ENCODE measurements at regions of chr2 and their contacts with region 1.

Region 1: DNA sequence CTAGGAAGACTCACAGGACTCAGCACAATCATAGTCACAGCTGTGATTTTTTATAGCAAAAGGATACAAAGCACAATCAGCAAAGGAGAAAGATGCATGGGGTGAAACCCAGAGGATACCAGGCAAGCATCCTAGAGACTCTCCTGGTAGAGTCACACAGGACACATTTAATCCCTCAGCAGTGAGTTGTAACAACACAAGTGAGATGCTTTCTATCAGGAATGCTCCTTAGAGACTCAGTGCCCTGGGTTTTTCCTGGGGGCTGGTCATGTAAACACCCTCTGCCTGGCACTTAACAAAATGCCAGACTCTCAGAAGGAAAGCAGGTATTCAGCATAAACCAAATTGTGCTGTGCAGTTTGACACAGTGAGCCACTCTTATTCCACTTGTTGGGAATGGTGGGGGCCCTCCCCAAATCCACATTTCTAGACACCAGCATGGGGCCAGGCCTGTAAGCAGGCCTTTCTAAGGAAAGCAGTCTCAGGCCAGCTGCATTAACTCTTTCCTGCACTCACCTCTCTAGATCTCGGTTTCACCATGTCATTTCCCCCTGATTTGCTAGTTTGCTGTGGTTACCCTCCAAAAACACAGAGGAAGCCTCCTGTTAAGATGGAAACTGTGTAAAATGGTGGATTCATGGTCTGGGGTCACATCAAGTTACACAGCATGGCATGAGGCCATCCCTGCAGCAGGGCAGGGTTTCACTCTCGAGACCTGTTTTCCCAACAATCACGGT is 16.9 kb upstream of the RNU4ATAC start:
- DNase-seq: no peak
- ATAC-seq: no peak
- H3K4me3 ChIP-seq: no peak overlapping the region
- H3K4me3 Mint-ChIP-seq: no peak overlapping the region
- H3K27ac ChIP-seq: no peak overlapping the region
- H3K27ac Mint-ChIP-seq: no peak overlapping the region
- H3K4me1 ChIP-seq: no peaks in the 10 kb centered on the region
- H3K4me1 Mint-ChIP-seq: peaks cover 10% of the 10 kb centered on the region
- H3K27me3 ChIP-seq: no peaks in the 10 kb centered on the region
- H3K27me3 Mint-ChIP-seq: no peaks in the 10 kb centered on the region
- CTCF ChIP-seq: no peak

Region 2: GRCh38 chr2:121479882-121480522 is 33.8 kb before region 1 on chr2:
- CTCF ChIA-PET with region 1: no interaction called
- POLR2A ChIA-PET with region 1: no interaction called
- intact Hi-C with region 1: no loop called
- DNase-seq: no peak
- ATAC-seq: no peak
- H3K4me3 ChIP-seq: no peak overlapping the region
- H3K4me3 Mint-ChIP-seq: no peak overlapping the region
- H3K27ac ChIP-seq: no peak overlapping the region
- H3K27ac Mint-ChIP-seq: no peak overlapping the region
- H3K4me1 ChIP-seq: no peaks in the 10 kb centered on the region
- H3K4me1 Mint-ChIP-seq: peaks cover 41% of the 10 kb centered on the region
- H3K27me3 ChIP-seq: no peaks in the 10 kb centered on the region
- H3K27me3 Mint-ChIP-seq: no peaks in the 10 kb centered on the region
- CTCF ChIP-seq: no peak

Region 3: DNA sequence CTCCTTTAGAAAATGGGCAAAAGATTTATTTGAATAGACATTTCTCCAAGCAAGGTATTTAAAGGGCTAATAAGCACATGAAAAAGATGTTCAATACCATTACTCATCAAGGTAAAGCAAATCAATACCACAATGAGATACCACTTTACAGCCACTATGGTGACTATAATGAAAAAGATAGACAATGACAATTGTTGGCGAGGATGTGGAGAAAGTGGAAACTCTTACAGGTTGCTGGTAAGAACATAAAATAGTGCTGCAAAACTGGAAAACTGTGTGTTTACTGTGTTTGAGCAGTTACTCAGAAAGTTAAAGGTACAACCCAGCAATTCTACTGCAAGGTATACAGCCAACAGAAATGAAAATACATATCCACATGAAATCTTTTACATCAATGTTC is 15.0 kb before region 1 on chr2:
- CTCF ChIA-PET with region 1: interaction called, 4 read pairs
- POLR2A ChIA-PET with region 1: no interaction called
- intact Hi-C with region 1: loop called in 1 of 2 experiments (anchors 2 kb)
- DNase-seq: no peak
- ATAC-seq: no peak
- H3K4me3 ChIP-seq: no peak overlapping the region
- H3K4me3 Mint-ChIP-seq: no peak overlapping the region
- H3K27ac ChIP-seq: no peak overlapping the region
- H3K27ac Mint-ChIP-seq: no peak overlapping the region
- H3K4me1 ChIP-seq: no peaks in the 10 kb centered on the region
- H3K4me1 Mint-ChIP-seq: peaks cover 13% of the 10 kb centered on the region
- H3K27me3 ChIP-seq: no peaks in the 10 kb centered on the region
- H3K27me3 Mint-ChIP-seq: no peaks in the 10 kb centered on the region
- CTCF ChIP-seq: no peak

Region 4: GRCh38 chr2:121583555-121583954 is 69.8 kb after region 1 on chr2:
- CTCF ChIA-PET with region 1: no interaction called
- POLR2A ChIA-PET with region 1: no interaction called
- intact Hi-C with region 1: no loop called
- DNase-seq: no peak
- ATAC-seq: no peak
- H3K4me3 ChIP-seq: no peak overlapping the region
- H3K4me3 Mint-ChIP-seq: no peak overlapping the region
- H3K27ac ChIP-seq: no peak overlapping the region
- H3K27ac Mint-ChIP-seq: no peak overlapping the region
- H3K4me1 ChIP-seq: peaks cover 3% of the 10 kb centered on the region
- H3K4me1 Mint-ChIP-seq: peaks cover 46% of the 10 kb centered on the region
- H3K27me3 ChIP-seq: no peaks in the 10 kb centered on the region
- H3K27me3 Mint-ChIP-seq: no peaks in the 10 kb centered on the region
- CTCF ChIP-seq: no peak

Region 5: GRCh38 chr2:121902171-121902591 is 388.4 kb after region 1 on chr2:
- CTCF ChIA-PET with region 1: no interaction called
- POLR2A ChIA-PET with region 1: no interaction called
- intact Hi-C with region 1: no loop called
- DNase-seq: peak in 2 of 9 experiments; percentile 13 to 29
- ATAC-seq: peak; percentile 57
- H3K4me3 ChIP-seq: no peak overlapping the region
- H3K4me3 Mint-ChIP-seq: peak overlapping the region; percentile 41
- H3K27ac ChIP-seq: no peak overlapping the region
- H3K27ac Mint-ChIP-seq: peak overlapping the region; percentile 37
- H3K4me1 ChIP-seq: no peaks in the 10 kb centered on the region
- H3K4me1 Mint-ChIP-seq: no peaks in the 10 kb centered on the region
- H3K27me3 ChIP-seq: no peaks in the 10 kb centered on the region
- H3K27me3 Mint-ChIP-seq: no peaks in the 10 kb centered on the region
- CTCF ChIP-seq: no peak

Measured in CD8-positive, alpha-beta T cell (primary cell).